Activated T-helper 1 cell treated with anti-CD3 and anti-CD28 coated beads, Interleukin-12 subunit alpha, Interleukin-12 subunit beta, Interleukin-2, Interleukin-4 antibody, amounts not matched to agents 30 ng/mL and 10 ng/mL and 1 ng/mL, durations not matched to agents 14 hours and 24 hours and 36 hours (primary cell): ENCODE measurements at regions of chr7 and their contacts with region 1.

Region 1: GRCh38 chr7:154927624-154928143 is 75.2 kb downstream of the PAXIP1 start:
- DNase-seq: peak; percentile 53
- H3K4me3 Mint-ChIP-seq: peak overlapping the region; percentile 94
- H3K27ac Mint-ChIP-seq: peak overlapping the region; percentile 93
- H3K4me1 Mint-ChIP-seq: peaks cover 25% of the 10 kb centered on the region
- H3K27me3 Mint-ChIP-seq: peaks cover 27% of the 10 kb centered on the region

Region 2: DNA sequence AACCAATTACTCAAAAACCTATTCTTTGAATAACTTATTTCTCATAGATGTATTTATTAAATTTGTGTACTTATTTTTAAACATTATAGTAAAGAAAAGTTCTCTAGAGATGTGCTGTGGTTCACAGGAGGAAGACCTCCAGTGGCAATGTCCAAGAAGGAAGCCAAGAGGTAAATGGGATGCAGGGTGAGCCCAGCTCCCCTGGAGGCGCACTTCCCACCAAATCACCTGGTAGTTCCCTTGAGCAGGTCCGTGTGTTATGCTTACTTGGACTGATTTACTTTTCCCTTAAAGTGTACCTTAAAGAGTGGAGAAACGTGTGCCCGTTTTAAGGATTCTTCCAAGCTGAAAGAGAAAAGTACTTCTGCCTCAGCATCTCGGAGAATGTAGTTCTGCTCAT is 19.9 kb after region 1 on chr7:
- intact Hi-C with region 1: no loop called
- DNase-seq: no peak
- H3K4me3 Mint-ChIP-seq: no peak overlapping the region
- H3K27ac Mint-ChIP-seq: no peak overlapping the region
- H3K4me1 Mint-ChIP-seq: no peaks in the 10 kb centered on the region
- H3K27me3 Mint-ChIP-seq: no peaks in the 10 kb centered on the region

Region 3: DNA sequence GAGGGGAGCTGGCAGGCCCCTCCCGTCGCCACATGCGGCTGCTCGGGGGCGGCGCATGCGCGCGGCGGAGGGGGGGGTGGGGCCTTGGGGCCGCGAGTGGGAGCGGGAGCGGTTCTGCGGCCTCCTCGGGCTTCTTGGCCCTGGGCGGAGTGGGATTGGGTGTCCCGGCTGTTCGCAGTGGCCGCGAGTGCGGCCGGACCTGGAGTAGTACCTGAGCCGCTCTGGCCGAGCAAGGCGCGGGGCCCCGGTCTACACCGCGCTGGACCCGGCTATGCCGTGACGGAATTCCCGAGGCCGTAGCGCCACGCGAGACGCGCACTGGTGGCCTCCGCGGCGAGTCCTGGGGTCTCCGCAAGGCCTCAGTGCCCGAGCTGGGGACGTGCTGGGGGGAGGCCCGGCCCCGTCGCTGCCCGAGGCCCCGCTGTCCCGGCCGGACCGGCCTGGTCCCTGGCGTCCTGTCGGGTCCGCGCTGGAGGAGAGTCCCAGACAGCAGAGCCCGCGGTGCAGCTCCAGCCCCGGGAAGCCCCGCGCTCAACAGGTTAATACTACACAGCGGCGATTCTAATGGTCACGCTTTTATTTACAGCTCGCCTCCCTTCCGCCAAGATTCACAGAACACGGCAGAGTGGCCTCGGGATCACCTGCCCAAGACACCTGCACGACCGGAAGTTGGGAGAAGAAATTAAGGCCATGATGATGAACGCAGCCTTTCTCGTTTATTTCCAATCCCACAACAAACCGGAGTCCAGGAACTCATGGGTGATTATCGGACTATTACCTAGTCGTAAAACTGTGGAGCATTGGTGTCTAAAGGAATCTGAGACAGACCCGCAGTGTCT is 75.9 kb after region 1 on chr7:
- intact Hi-C with region 1: loop called (anchors 1 kb)
- DNase-seq: peak; percentile 78
- H3K4me3 Mint-ChIP-seq: peak overlapping the region; percentile 95
- H3K27ac Mint-ChIP-seq: peak overlapping the region; percentile 94
- H3K4me1 Mint-ChIP-seq: peaks cover 6% of the 10 kb centered on the region
- H3K27me3 Mint-ChIP-seq: peaks cover 1% of the 10 kb centered on the region

Region 4: DNA sequence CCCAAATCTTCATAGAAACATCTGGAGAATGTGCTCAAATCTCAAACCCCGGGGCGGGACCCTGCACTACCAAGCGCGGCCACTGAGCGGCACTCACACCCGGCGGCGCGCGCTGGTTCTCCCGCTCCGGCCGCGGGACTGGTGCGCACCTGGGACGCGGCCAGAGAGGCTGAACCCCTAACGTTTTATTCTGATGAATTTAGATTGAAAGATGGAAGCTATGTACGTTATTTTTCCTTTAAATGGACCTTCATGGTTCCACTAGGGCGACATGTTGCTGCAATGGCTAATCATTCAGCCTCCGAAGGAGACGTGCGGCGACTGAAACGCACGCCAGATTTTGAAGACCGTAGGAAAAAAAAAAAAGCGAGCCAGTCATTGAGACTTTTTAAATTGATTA is 263.0 kb after region 1 on chr7:
- intact Hi-C with region 1: loop called (anchors 2 kb)
- DNase-seq: peak; percentile 44
- H3K4me3 Mint-ChIP-seq: no peak overlapping the region
- H3K27ac Mint-ChIP-seq: peak overlapping the region; percentile 55
- H3K4me1 Mint-ChIP-seq: peaks cover 17% of the 10 kb centered on the region
- H3K27me3 Mint-ChIP-seq: peaks cover 13% of the 10 kb centered on the region

Region 5: DNA sequence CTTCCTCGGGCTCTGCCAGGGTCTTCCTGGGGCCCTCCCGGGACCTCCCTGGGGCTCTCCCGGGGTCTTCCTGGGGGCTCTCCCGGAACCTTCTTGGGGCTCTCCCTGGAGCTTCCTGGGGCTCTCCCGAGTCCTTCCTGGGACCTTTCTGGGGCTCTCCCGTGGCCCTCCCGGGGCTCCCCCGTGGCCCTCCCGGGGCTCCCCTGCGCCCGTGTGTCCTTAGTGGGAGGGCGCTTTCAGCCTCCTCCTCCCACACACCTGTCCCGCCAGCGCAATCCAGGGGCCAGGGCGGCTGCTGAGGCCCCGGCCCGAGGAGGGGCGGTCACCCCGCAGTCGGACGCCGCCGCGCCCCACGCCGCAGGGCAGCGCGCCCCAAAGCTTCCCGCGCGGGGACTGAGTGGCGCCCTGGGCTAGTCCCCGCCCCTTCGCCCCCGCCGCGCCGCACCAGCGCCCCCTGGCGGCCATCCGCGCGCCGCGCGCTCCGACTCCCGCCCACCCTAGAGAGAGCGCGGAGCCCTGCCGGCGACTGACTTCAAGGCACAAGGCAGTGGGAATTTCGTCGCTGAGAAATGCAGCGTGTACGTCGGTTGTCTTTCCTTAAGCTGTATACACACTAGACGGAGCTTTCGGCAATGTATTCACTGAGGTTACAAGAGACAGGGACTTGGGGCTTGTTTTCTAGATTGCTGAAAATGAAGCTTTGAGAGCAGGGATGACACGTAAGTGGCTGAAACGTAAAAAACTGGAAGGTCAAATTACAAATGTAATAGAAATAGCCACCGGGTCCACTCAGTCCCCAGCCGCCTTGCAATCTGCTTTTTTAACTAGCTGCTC is 417.1 kb after region 1 on chr7:
- intact Hi-C with region 1: loop called (anchors 1 kb)
- DNase-seq: peak; percentile 73
- H3K4me3 Mint-ChIP-seq: peak overlapping the region; percentile 35
- H3K27ac Mint-ChIP-seq: no peak overlapping the region
- H3K4me1 Mint-ChIP-seq: peaks cover 7% of the 10 kb centered on the region
- H3K27me3 Mint-ChIP-seq: peaks cover 15% of the 10 kb centered on the region

Region 6: GRCh38 chr7:155644178-155644970 is 716.7 kb after region 1 on chr7 and contains the start of gene RBM33:
- intact Hi-C with region 1: loop called (anchors 1 kb)
- DNase-seq: peak; percentile 78
- H3K4me3 Mint-ChIP-seq: peak within 1 kb of the TSS; percentile 99
- H3K27ac Mint-ChIP-seq: peak within 1 kb of the TSS; percentile 99
- H3K4me1 Mint-ChIP-seq: peaks cover 41% of the 10 kb centered on the region
- H3K27me3 Mint-ChIP-seq: no peaks in the 10 kb centered on the region
- total RNA-seq, gene RBM33: 75.2 and 78.9 TPM in 2 replicates

Region 7: GRCh38 chr7:156892821-156893706 is 1965.4 kb after region 1 on chr7 and contains the start of gene LMBR1:
- intact Hi-C with region 1: loop called (anchors 2 kb)
- DNase-seq: peak; percentile 92
- H3K4me3 Mint-ChIP-seq: peak within 1 kb of the TSS; percentile 95
- H3K27ac Mint-ChIP-seq: peak within 1 kb of the TSS; percentile 93
- H3K4me1 Mint-ChIP-seq: peaks cover 43% of the 10 kb centered on the region
- H3K27me3 Mint-ChIP-seq: no peaks in the 10 kb centered on the region
- total RNA-seq, gene LMBR1: 53.5 and 55.5 TPM in 2 replicates